AG04450 (cell line): ENCODE measurements at regions of chr7 and their contacts with region 1.

Region 1: GRCh38 chr7:27143023-27143949 is at the start of gene HOXA5:
- DNase-seq: peak; percentile 100
- H3K4me3 ChIP-seq: peak within 1 kb of the TSS; percentile 94
- H3K27ac ChIP-seq: peak within 1 kb of the TSS; percentile 93
- H3K27me3 ChIP-seq: no peaks in the 10 kb centered on the region
- CTCF ChIP-seq: peak; percentile 84; the same call in 1 of the 2 replicates
- polyA plus RNA-seq, gene HOXA5: 48.3 and 51.0 TPM in 2 replicates

Region 2: DNA sequence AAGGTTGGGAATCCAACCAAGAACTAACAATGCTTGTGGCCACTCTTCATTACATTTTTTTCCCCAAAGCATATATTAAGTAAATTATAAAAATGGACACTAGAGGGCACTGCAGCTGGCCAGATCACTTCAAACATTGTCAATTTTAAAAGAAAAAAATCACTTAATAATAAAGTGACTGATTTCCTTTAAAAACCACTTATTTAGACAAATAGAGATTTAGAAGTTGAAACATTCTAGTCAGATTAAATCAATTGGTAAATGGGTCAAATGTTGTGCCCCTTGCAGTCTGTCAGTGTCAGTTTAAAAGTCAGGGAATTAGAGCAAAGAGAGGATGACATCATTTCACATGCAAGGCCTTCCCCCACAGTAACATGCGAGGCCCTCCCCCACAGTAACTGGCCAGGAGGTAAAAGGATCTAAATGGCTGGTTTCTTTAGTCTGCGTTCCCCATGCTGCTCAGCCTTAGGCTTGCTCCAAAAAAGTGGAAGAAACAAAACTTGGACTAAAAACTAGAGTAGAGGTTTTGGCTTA is 456.8 kb before region 1 on chr7:
- CTCF ChIA-PET with region 1: interaction called, 43 read pairs
- POLR2A ChIA-PET with region 1: no interaction called
- DNase-seq: peak; percentile 78
- H3K4me3 ChIP-seq: no peak overlapping the region
- H3K27ac ChIP-seq: peak overlapping the region; percentile 41
- H3K27me3 ChIP-seq: no peaks in the 10 kb centered on the region
- CTCF ChIP-seq: peak; percentile 63

Region 3: GRCh38 chr7:27095897-27096767 is 47.2 kb before region 1 on chr7 and contains the start of gene HOXA1:
- CTCF ChIA-PET with region 1: interaction called, 23 read pairs
- POLR2A ChIA-PET with region 1: interaction called, 23 read pairs
- DNase-seq: peak; percentile 90
- H3K4me3 ChIP-seq: peak within 1 kb of the TSS; percentile 91
- H3K27ac ChIP-seq: peak within 1 kb of the TSS; percentile 94
- H3K27me3 ChIP-seq: no peaks in the 10 kb centered on the region
- CTCF ChIP-seq: no peak
- polyA plus RNA-seq, gene HOXA1: 2.6 and 2.9 TPM in 2 replicates

Region 4: GRCh38 chr7:27115221-27116026 is 27.9 kb before region 1 on chr7:
- CTCF ChIA-PET with region 1: interaction called, 16 read pairs
- POLR2A ChIA-PET with region 1: interaction called, 14 read pairs
- DNase-seq: peak; percentile 81
- H3K4me3 ChIP-seq: peak overlapping the region; percentile 84
- H3K27ac ChIP-seq: peak overlapping the region; percentile 98
- H3K27me3 ChIP-seq: no peaks in the 10 kb centered on the region
- CTCF ChIP-seq: no peak

Region 5: GRCh38 chr7:27130540-27131389 is 12.5 kb before region 1 on chr7 and contains the start of gene HOXA4:
- CTCF ChIA-PET with region 1: interaction called, 18 read pairs
- POLR2A ChIA-PET with region 1: interaction called, 9 read pairs
- DNase-seq: no peak
- H3K4me3 ChIP-seq: peak within 1 kb of the TSS; percentile 68
- H3K27ac ChIP-seq: peak within 1 kb of the TSS; percentile 33
- H3K27me3 ChIP-seq: no peaks in the 10 kb centered on the region
- CTCF ChIP-seq: no peak
- polyA plus RNA-seq, gene HOXA4: 5.4 and 5.8 TPM in 2 replicates

Region 6: GRCh38 chr7:27224983-27225934 is 82.0 kb after region 1 on chr7:
- CTCF ChIA-PET with region 1: no interaction called
- POLR2A ChIA-PET with region 1: no interaction called
- DNase-seq: no peak
- H3K4me3 ChIP-seq: no peak overlapping the region
- H3K27ac ChIP-seq: no peak overlapping the region
- H3K27me3 ChIP-seq: peaks cover 86% of the 10 kb centered on the region
- CTCF ChIP-seq: no peak